ENCODE measurements at regions of chr2 and their contacts with region 1.

Region 1: DNA sequence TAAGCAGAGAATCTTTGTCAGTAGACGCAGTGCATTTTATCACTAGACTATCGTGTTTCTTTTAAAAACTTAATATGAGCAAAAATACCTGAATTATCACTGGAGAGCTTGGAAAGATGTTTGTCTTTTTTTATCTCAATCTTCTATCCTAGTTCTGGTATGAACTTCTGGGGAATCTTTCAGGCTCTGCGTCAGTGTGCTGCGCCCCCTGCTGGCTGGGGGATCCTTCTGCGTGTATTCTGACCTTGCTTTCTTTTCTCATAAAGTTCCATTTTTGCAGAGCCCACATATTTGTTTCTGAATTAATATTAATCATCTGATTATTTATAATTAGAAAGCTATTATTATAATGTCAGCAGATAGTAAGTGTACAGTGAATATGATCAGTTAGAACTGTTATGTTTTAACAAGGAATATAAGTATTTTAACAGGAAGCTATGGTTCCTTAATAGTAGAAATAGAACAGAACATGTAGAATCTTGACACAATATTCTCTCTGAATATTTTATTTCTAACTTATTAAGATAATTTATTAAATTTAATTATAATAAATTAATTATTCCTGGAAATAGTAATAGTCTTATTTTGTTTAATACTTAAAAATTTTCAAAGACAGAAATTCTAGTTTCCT is 945.0 kb upstream of the CRIM1 start:
- DNase-seq: peak; percentile 53
- H3K4me3 Mint-ChIP-seq: no peak overlapping the region
- H3K27ac Mint-ChIP-seq: no peak overlapping the region
- H3K4me1 Mint-ChIP-seq: no peaks in the 10 kb centered on the region
- H3K27me3 Mint-ChIP-seq: peaks cover 2% of the 10 kb centered on the region

Region 2: GRCh38 chr2:34012715-34013302 is 1397.7 kb before region 1 on chr2:
- CTCF ChIA-PET with region 1: no interaction called
- intact Hi-C with region 1: loop called (anchors 2 kb)
- DNase-seq: peak; percentile 53
- H3K4me3 Mint-ChIP-seq: no peak overlapping the region
- H3K27ac Mint-ChIP-seq: no peak overlapping the region
- H3K4me1 Mint-ChIP-seq: no peaks in the 10 kb centered on the region
- H3K27me3 Mint-ChIP-seq: no peaks in the 10 kb centered on the region